ENCODE measurements at regions of chr19 and their contacts with region 1.

Region 1: DNA sequence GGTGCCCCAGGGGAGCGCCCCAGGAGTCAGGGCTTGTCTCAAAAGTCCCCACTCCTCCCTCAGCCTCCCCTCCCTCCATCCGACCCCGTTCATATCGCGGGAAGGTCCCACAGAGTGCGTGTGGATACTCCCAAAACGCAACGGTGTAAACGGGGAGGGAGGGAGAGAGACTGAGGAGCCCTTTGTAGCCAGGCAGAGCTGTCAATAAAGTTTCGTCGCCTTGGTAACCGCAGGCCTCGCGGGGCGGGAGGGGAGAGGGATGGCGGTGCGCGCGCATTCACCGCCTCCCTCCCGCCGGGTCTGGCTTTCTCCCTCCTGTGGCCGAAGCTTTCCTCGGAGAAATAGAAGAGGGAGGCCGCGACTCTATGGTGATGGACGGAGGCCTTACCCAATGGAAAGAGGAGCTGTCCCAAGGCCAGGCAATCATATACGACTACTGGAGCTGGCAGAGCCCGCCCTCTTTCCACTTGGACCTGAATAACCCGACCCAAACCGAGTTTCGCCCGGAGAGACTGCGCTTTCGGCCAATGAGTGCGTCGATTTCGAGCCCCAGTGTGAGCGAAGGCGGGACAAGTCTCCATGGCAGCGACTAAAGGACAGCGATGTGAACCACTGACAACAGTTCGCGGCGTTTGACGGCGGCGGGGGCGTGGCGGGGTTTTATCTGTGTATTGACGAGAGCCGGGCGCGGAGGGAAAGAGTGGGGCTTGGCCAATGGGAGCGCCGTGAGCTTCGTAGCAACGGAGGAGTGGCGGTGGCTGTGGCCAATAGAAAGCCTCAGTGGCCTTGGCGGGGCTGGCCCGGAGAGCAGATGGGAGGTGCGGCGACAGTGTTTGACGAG is at the start of gene KMT5C:
- DNase-seq: peak; percentile 100
- H3K4me3 Mint-ChIP-seq: peak within 1 kb of the TSS; percentile 90
- H3K27ac Mint-ChIP-seq: peak within 1 kb of the TSS; percentile 92
- H3K4me1 Mint-ChIP-seq: peaks cover 12% of the 10 kb centered on the region
- H3K27me3 Mint-ChIP-seq: no peaks in the 10 kb centered on the region
- total RNA-seq, gene KMT5C: 45.9 to 47.1 TPM

Region 2: DNA sequence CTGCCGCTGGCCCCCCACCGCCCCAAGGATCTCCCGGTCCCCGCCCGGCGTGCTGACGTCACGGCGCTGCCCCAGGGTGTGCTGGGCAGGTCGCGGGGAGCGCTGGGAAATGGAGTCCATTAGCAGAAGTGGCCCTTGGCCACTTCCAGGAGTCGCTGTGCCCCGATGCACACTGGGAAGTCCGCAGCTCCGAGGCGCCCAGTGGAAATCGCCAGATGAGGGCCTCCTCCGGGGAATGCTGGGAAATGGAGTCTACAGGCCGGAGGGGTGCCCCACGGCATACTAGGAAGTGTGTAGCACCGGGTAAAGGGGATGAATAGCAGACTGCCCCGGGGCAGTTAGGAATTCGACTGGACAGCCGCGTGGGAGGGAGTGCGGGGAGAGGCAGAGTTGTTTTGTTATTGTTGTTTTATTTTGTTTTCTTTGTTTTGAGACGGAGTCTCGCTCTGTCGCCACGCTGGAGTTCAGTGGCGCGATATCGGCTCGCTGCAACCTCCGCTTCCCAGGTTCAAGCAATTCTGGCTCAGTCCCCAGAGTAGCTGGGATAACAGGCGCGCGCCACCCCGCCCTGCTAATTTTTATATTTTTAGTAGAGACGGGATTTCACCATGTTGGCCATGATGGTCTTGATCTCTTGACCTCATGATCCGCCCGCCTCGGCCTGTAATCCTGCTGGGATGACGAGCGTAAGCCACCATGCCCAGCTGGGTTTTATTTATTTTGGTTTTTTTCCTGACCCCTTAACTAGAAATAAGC is 221.5 kb before region 1 on chr19 and contains the start of gene PPP1R12C:
- CTCF ChIA-PET with region 1: no interaction called
- intact Hi-C with region 1: loop called (anchors 1 kb)
- DNase-seq: peak; percentile 99
- H3K4me3 Mint-ChIP-seq: peak within 1 kb of the TSS; percentile 98
- H3K27ac Mint-ChIP-seq: peak within 1 kb of the TSS; percentile 90
- H3K4me1 Mint-ChIP-seq: peaks cover 23% of the 10 kb centered on the region
- H3K27me3 Mint-ChIP-seq: peaks cover 2% of the 10 kb centered on the region
- total RNA-seq, gene PPP1R12C: 41.2 to 42.1 TPM

Region 3: DNA sequence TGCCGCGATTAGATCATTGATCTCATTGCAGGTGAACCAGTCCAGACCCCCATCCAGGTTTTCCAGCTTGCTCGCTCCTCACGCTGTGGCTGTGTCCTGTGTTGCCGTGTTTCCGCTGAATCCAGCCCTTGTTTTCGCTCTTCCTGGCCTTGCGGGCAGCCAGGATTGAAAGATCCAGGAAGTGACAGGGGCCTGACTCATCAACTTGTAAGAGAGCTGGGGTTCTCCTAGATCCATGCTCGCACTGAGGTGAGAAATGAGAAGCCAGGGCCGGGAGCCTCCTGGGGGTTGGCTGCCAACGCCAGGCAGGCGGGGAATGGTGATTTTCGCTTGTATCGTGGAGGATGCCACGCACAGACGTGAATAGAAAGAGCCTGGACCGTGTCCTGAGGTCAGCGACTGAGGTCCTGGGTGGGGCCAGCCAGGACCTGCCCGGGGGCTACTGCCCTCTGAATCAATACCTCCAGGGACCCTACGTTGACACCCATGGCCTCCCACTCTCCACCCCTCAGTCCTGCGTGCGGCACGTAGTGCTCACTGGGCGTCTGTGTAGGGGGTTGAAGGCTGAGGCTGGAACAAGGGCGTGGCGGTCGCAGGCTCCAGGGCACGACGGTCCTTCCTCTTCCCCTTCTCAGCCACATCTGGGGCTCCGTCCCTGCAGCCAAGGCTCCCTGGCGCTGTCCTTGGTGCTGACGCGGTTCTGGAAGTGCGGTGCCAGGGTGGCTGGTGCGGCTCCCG is 122.6 kb before region 1 on chr19:
- CTCF ChIA-PET with region 1: no interaction called
- intact Hi-C with region 1: no loop called
- DNase-seq: peak; percentile 79
- H3K4me3 Mint-ChIP-seq: peak overlapping the region; percentile 50
- H3K27ac Mint-ChIP-seq: no peak overlapping the region
- H3K4me1 Mint-ChIP-seq: peaks cover 13% of the 10 kb centered on the region
- H3K27me3 Mint-ChIP-seq: peaks cover 22% of the 10 kb centered on the region

Region 4: GRCh38 chr19:55301459-55302317 is 37.6 kb before region 1 on chr19:
- CTCF ChIA-PET with region 1: interaction called, 5 read pairs
- intact Hi-C with region 1: loop called (anchors 1 kb)
- DNase-seq: peak; percentile 96
- H3K4me3 Mint-ChIP-seq: peak overlapping the region; percentile 78
- H3K27ac Mint-ChIP-seq: peak overlapping the region; percentile 86
- H3K4me1 Mint-ChIP-seq: peaks cover 7% of the 10 kb centered on the region
- H3K27me3 Mint-ChIP-seq: no peaks in the 10 kb centered on the region

Region 5: DNA sequence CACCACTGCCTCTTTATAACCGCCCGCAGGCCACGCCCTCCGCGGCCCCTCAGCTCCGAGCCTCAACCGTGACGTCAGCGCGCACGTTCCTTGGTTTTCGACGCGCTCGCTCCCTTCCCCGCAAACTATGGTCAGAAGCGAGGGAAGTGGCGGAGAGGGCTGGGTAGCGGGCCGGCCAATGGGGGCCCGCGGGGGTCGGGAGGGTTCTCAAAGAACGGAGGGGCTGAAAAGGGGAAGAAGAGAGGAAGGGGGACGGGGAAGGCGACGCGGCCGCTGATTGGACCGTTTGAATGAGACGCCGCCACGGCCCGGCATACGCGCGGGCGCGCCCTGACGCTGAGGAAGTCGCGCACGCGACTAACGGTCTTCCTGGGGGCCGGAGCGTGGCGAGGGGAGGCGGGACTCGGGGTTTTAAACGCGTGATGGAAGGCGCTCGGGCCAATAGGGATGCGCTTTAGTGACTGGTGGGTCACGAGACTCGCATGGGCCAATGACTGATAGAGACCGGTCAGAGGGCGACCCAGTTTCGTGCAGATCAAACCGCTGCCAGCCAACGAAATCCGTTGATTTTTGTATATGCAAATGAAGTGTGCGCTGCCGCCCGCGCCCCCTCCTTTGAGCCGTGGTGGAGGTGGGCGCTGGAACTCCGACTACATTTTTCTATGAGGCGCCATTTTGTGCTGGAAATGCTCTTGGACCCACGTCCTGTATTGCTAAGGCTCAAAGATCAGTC is 68.7 kb after region 1 on chr19:
- CTCF ChIA-PET with region 1: no interaction called
- intact Hi-C with region 1: loop called (anchors 1 kb)
- DNase-seq: peak; percentile 98
- H3K4me3 Mint-ChIP-seq: peak overlapping the region; percentile 93
- H3K27ac Mint-ChIP-seq: peak overlapping the region; percentile 96
- H3K4me1 Mint-ChIP-seq: peaks cover 27% of the 10 kb centered on the region
- H3K27me3 Mint-ChIP-seq: no peaks in the 10 kb centered on the region

Region 6: DNA sequence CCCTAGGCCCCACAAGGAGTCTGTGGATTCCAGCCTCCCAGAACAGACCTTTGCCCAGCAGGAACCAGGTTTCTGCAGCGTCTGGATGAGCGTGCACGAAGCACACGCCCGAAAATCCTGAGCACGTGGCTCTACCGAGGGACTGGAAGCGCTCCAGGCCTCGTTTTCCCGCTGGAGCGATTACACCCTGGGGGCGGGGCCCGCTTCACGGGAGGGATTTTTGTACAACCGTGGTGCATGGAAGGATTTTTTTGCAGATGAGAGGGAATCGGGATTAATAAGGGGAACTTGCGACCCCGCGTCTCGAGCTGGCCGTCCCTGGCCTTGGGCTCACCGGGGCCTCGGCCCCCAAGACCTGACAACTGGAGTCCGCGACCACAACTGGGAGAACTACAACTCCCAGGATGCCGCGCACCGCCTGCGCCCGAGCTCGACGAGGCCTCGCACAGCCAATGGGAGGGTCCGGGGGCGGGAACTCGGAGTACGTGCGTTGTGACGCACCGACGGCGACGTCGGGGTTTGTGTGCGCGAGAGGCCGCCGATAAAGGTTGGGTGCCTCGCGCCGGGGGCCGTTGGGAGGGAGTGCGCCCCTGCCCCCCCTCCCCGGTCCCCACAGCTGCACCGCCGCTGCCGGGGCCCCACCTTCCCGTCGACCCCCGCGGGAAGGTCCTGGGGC is 137.0 kb after region 1 on chr19 and contains the start of gene ZNF628:
- CTCF ChIA-PET with region 1: no interaction called
- intact Hi-C with region 1: loop called (anchors 1 kb)
- DNase-seq: peak; percentile 99
- H3K4me3 Mint-ChIP-seq: peak within 1 kb of the TSS; percentile 90
- H3K27ac Mint-ChIP-seq: peak within 1 kb of the TSS; percentile 90
- H3K4me1 Mint-ChIP-seq: peaks cover 30% of the 10 kb centered on the region
- H3K27me3 Mint-ChIP-seq: no peaks in the 10 kb centered on the region
- total RNA-seq, gene ZNF628: 6.0 to 6.1 TPM

Measured in activated naive CD4-positive, alpha-beta T cell treated with anti-CD3 and anti-CD28 coated beads for 36 hours (primary cell).